ENCODE measurements at regions of chrX and their contacts with region 1.

Region 1: DNA sequence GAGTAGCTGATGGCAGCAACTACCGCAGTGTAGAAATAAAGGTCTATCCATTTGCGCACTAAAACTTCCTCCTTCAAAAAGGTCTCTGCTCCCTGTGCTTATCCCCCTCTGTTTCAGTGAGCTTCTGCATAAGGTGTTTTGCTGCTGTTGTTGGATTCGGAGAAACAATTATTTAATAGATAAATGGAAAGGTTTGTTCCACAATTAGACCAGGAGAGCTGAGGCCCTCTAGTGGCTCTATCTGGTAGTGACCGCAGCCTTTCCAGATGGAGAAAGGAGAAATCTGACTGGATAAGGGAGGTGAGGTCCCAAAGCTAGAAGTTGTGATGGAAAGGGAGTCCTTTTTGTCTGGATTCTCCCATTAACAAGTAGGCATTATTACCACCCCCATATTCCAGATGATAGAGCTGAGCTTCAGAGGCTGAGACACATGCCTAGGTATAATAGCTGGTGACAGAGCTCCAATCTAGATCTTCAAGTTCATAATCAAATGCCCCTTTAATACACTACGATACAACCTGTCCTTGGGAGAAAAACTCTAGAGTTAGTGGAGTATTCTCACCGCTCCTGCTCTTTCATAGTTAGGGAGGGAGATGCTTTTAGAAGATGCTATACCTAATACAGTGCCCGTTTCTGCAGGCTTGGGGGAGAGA is 5.1 kb upstream of the GABRQ start:
- DNase-seq: peak in 1 of 2 donors; percentile 34
- H3K4me3 ChIP-seq: no peak overlapping the region
- CTCF ChIP-seq: peak in 1 of 3 donors; percentile 35
- POLR2A ChIP-seq: no peak

Region 2: GRCh38 chrX:151753313-151754041 is 879.1 kb before region 1 on chrX:
- intact Hi-C with region 1: loop called (anchors 5 kb)
- DNase-seq: peak; percentile 24 to 86
- H3K4me3 ChIP-seq: no peak overlapping the region
- CTCF ChIP-seq: peak in 1 of 3 donors; percentile 49
- POLR2A ChIP-seq: no peak

Region 3: GRCh38 chrX:151825927-151826481 is 806.6 kb before region 1 on chrX:
- intact Hi-C with region 1: loop called (anchors 10 kb)
- DNase-seq: peak in 1 of 2 donors; percentile 58
- H3K4me3 ChIP-seq: no peak overlapping the region
- CTCF ChIP-seq: no peak
- POLR2A ChIP-seq: no peak

Region 4: GRCh38 chrX:152202886-152203285 is 429.7 kb before region 1 on chrX:
- intact Hi-C with region 1: no loop called
- DNase-seq: no peak
- H3K4me3 ChIP-seq: no peak overlapping the region
- CTCF ChIP-seq: no peak
- POLR2A ChIP-seq: no peak

Region 5: DNA sequence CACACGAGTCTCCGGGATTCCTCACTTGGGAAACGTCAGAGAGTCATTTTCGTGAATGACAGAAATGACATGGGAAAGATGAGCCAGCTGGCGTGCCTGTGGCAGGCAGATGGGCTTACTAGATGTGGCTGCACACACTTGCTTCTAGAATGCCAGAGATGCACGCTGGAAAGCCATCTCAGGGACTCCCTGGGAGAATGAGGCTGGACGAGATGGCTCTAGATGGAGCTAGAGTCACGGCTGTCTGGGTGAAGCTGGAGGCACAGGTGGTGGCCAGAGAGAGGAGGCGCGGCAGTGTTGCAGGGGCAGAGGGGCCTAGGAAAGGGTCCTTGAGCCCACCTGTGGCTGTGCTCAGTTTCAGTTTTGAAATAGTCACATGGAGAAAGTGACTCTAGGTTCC is 1689.0 kb after region 1 on chrX:
- intact Hi-C with region 1: no loop called
- DNase-seq: no peak
- H3K4me3 ChIP-seq: no peak overlapping the region
- CTCF ChIP-seq: no peak
- POLR2A ChIP-seq: no peak